Adrenal gland (tissue), 19 donors: ENCODE measurements at regions of chr12 and their contacts with region 1.

Region 1: DNA sequence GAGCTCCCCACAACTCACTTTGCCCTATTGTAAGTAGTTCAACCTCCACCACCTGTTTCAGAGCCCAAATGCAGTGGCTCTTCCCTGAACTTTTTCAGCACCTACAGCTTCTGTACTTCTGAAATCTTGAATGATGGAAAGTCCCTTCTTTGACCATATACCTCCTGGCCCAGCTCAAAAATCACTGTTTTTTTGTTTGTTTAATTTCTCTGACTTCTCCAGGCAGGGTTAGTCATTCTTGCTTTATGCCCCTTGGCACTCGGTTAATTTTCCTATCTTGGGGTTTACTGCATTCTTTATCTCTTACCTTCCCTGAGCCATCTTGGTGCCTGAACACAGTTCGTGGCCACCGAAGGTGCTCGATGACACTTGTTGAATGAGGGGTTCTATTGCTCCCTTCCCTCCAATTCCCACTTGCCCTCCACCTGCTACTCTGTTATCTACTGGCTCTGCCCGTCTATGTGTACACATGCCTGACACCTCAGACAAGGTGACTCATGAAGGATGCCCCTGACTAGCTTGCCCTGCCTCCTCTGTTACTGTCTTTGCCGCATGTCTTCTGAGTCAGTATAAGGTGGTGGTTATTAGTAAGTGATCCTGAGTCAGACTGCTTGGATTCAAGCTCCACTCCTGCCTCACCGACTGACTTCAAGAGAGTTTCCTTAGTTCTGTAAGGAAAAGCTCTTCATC is 4.4 kb downstream of the AMHR2 start:
- DNase-seq: peak; percentile 56 to 87 (median 81)
- H3K4me3 ChIP-seq: no peak overlapping the region
- H3K27ac ChIP-seq: peak overlapping the region in 3 of 5 donors; percentile 6 to 86 (median 80)
- H3K4me1 ChIP-seq: peaks cover 15 to 40% of the 10 kb centered on the region in 2 donors
- H3K27me3 ChIP-seq: no peaks in the 10 kb centered on the region
- CTCF ChIP-seq: no peak
- POLR2A ChIP-seq: peak in 1 of 2 donors; percentile 44

Region 2: DNA sequence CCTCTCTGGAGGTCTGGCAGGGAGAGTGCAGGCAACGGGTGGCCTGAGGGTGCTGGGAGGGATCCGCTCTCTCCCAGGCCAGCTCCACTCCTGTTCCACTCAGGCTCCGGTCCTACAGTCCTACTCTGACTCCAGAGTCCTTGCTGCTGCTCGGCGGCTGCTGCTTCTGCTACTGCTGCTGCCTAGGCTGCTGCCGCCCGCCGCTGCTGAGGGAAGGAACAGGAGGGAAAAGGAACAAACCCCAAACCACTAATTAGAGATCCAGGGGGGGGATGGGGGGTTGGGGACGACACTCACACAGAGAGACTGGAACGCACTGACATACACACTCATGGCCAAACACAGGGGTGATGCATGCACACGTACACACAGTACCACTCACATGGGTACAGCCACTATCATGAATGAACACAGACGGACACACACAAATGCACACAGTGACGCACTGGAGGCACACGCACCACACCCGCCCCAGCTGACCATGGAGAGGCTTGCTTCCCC is 91.8 kb before region 1 on chr12 and contains the start of gene SP7:
- intact Hi-C with region 1: loop called in 1 of 2 experiments (anchors 5 kb)
- DNase-seq: no peak
- H3K4me3 ChIP-seq: no peak within 1 kb of the TSS
- H3K27ac ChIP-seq: no peak within 1 kb of the TSS
- H3K4me1 ChIP-seq: no peaks in the 10 kb centered on the region
- H3K27me3 ChIP-seq: peaks cover 10% of the 10 kb centered on the region
- CTCF ChIP-seq: no peak
- POLR2A ChIP-seq: no peak
- total RNA-seq, gene SP7: not detected